Gastrocnemius medialis (tissue), 4 donors: ENCODE measurements at regions of chr16 and their contacts with region 1.

Region 1: GRCh38 chr16:2340564-2341455 is at the start of gene ABCA3:
- DNase-seq: peak; percentile 74 to 87
- ATAC-seq: peak; percentile 84 to 89
- H3K4me3 ChIP-seq: peak within 1 kb of the TSS; percentile 65 to 98 (median 82)
- H3K27ac ChIP-seq: peak within 1 kb of the TSS; percentile 30 to 54 (median 36)
- H3K4me1 ChIP-seq: peaks cover 9 to 20% of the 10 kb centered on the region in 2 donors
- H3K27me3 ChIP-seq: no peaks in the 10 kb centered on the region
- CTCF ChIP-seq: peak; percentile 96 to 100 (median 100)
- POLR2A ChIP-seq: peak; percentile 40 to 70
- total RNA-seq, gene ABCA3: 2.7 to 15.0 (median 10.9) TPM

Region 2: GRCh38 chr16:2251483-2252240 is 89.1 kb before region 1 on chr16 and contains the start of gene ECI1:
- in situ Hi-C with region 1: no loop called
- intact Hi-C with region 1: loop called (anchors 2 kb)
- DNase-seq: peak; percentile 93 to 95
- ATAC-seq: peak; percentile 92 to 96
- H3K4me3 ChIP-seq: peak within 1 kb of the TSS; percentile 68 to 89 (median 70)
- H3K27ac ChIP-seq: peak within 1 kb of the TSS; percentile 86 to 97 (median 92)
- H3K4me1 ChIP-seq: peaks cover 20 to 22% of the 10 kb centered on the region in 2 donors
- H3K27me3 ChIP-seq: no peaks in the 10 kb centered on the region
- CTCF ChIP-seq: peak; percentile 64 to 92 (median 87)
- POLR2A ChIP-seq: peak; percentile 87 to 94
- total RNA-seq, gene ECI1: 74.0 to 137 (median 79.3) TPM

Region 3: GRCh38 chr16:2429034-2429770 is 88.4 kb after region 1 on chr16 and contains the start of gene CCNF:
- in situ Hi-C with region 1: no loop called
- intact Hi-C with region 1: loop called (anchors 1 kb)
- DNase-seq: peak; percentile 96 to 97
- ATAC-seq: peak; percentile 95 to 97
- H3K4me3 ChIP-seq: peak within 1 kb of the TSS; percentile 64 to 97 (median 87)
- H3K27ac ChIP-seq: peak within 1 kb of the TSS; percentile 73 to 78 (median 76)
- H3K4me1 ChIP-seq: peaks cover 6 to 8% of the 10 kb centered on the region in 2 donors
- H3K27me3 ChIP-seq: no peaks in the 10 kb centered on the region
- CTCF ChIP-seq: peak in 2 of 5 experiments; percentile 26 to 35
- POLR2A ChIP-seq: peak; percentile 51 to 52
- total RNA-seq, gene CCNF: 1.8 to 3.6 (median 2.4) TPM

Region 4: DNA sequence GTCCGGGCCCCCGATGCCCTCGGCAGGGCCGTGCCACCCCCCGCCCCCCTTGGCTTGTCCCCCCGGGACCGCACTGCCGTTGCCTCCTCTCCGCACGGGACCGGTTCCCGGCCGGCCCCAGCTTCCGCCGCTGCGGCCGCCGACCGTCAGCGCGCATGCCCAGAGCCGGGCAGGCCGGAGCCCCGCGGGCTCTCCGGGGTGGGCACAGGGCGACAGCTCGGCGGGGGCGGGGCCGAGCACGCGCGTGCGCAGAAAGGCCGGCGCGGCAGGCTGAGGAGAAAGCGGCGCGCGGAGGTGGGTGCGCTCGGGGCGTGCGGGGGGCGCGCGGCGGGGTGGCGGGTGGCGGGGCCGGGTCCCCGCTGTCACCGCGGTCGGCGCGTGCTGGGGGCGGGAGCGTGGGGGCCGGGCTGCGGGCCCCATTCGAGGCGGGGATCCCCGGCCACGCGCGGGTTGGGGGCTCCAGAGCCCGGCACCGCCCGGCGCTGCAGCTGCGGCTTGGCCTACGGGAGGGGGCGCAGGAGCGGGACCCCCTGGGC is 134.1 kb after region 1 on chr16 and contains the start of gene TBC1D24:
- in situ Hi-C with region 1: loop called in 1 of 4 experiments (anchors 25 kb)
- intact Hi-C with region 1: loop called (anchors 5 kb)
- DNase-seq: peak; percentile 63 to 84
- ATAC-seq: peak; percentile 83 to 90
- H3K4me3 ChIP-seq: peak within 1 kb of the TSS; percentile 66 to 87 (median 72)
- H3K27ac ChIP-seq: peak within 1 kb of the TSS; percentile 81 to 91 (median 86)
- H3K4me1 ChIP-seq: peaks cover 14 to 24% of the 10 kb centered on the region in 2 donors
- H3K27me3 ChIP-seq: peaks cover 30 to 32% (median 31%) of the 10 kb centered on the region in 3 donors
- CTCF ChIP-seq: no peak
- POLR2A ChIP-seq: peak; percentile 84 to 91
- total RNA-seq, gene TBC1D24: 8.7 to 14.8 (median 9.9) TPM

Region 5: DNA sequence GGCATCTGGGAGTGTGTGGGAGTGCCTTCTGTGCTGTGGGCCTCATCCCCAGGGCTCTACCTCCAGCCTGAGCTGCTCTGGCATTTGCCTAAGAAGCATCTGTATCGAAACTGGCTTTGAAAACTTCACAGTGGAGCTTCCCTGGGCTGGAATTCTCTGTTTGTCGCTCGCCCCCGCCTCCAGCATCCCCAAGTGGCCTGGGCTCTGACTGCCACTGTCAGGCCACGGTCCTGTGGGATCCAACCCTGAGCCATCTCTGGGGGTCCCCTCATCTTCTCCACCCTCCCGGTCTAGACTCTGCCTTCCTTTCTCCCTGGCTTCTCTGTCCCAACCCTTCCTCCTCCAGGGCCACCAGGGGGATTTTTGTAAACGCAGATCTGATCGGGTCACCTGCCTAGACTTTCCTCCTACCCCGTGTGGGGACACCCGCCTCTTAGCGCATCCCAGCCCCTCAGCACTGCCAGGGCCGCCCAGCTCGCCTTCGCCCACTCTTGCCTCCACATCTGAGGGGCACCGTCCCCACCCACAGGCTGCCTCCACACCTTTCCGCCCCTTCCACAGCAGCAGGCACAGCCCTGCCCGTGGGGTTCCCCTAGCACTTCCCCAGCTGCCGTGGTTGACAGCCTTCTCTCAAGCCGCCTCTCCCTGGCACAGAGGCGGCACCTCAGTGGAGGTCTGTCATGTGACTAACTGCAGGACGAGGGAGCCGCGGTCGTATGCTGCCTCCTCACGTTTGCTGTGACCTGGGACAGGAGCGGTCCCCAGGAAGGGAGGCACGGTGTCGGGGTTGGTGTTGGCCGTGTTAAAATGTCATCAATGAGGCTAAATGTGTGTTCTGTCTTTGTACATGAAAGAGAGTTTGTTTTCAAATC is 146.1 kb after region 1 on chr16:
- in situ Hi-C with region 1: loop called in 3 of 4 experiments (anchors 5 to 25 kb)
- intact Hi-C with region 1: loop called (anchors 5 kb)
- DNase-seq: peak; percentile 41 to 53
- ATAC-seq: no peak
- H3K4me3 ChIP-seq: no peak overlapping the region
- H3K27ac ChIP-seq: no peak overlapping the region
- H3K4me1 ChIP-seq: peaks cover 23 to 53% of the 10 kb centered on the region in 2 donors
- H3K27me3 ChIP-seq: no peaks in the 10 kb centered on the region
- CTCF ChIP-seq: peak in 1 of 5 experiments; percentile 34
- POLR2A ChIP-seq: no peak

Region 6: DNA sequence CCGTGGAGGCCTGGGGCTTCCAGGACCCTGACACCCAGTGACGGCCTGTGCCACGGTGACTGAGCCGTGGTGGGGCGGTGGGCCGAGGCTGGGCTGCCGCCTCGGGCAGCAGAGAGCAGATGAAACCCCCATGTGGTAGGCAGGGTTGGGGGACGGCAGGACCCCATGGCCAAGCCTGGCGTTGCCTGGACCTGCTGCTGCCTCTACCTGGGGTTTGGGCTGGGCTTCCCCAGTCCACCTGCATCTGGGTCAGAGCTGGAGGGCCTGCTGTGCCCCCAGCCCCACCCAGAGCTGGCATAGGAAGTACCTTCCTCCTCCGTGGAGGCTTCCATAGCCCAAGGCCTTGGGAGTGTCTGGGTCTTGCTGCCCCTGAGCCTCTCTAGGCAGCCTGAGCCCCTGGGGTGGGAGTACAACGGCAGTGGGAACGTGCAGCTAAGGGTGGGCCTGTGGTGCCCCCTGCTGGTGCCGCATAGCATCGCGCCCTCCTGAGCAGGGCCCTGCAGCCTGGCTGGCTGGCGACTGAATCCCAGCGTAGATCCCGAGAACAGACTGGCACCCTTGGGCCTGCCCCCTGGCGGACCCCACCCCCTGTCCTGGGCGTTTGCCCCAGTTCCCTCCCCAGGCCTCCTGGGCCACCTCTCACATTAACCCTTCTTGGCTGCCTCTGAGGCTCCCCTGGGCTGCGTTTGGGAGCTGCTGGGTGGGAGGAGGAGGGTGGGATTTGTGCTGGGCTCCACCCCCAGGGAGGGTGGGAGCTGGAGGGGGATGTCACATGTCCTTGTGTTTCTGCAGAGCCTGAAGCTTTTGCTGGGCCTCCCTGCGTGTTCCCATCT is 160.3 kb after region 1 on chr16:
- in situ Hi-C with region 1: loop called in 3 of 4 experiments (anchors 10 to 25 kb)
- intact Hi-C with region 1: loop called (anchors 1 kb)
- DNase-seq: peak in 1 of 2 donors; percentile 70
- ATAC-seq: peak; percentile 79 to 81
- H3K4me3 ChIP-seq: peak overlapping the region in 2 of 4 donors; percentile 9 to 32
- H3K27ac ChIP-seq: no peak overlapping the region
- H3K4me1 ChIP-seq: peaks cover 30 to 36% of the 10 kb centered on the region in 2 donors
- H3K27me3 ChIP-seq: no peaks in the 10 kb centered on the region
- CTCF ChIP-seq: peak; percentile 94 to 99 (median 97)
- POLR2A ChIP-seq: no peak